GM12878 (cell line): ENCODE measurements at regions of chr12 and their contacts with region 1.

Region 1: DNA sequence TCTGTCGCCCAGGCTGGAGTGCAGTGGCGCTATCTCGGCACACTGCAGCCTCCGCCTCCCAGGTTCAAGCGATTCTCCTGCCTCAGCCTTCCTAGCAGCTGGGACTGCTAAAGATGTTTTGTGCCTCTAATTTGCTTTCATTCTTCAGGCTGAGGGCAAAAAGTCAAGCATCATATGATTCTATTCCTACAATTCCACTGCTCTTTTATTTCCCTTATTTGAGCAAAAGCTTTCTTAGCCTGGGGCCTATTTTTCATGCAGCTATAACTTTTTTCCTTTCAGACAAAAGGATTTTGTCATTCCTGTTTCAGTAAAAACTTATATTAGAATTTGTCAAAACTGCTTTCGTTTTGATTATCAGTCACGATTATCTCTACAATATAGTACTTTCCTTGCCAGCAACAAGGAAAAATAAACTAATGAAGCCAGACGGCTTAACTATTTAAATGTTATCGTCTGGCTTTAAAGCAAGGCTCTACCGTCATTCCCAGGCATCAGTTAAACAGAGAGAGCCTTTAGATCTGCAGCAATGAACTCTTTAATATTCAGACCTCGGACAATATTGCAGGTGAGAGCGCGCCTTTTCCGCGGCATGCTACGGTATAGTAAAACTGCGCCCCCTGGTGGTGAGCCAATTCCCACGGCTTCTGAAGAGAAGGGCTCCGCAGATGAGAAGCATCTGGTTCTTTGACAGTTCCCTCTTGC is 1.4 kb upstream of the SLC2A13 start:
- DNase-seq: peak; percentile 42
- ATAC-seq: peak; percentile 64
- H3K4me3 ChIP-seq: peak overlapping the region; percentile 33
- H3K27ac ChIP-seq: no peak overlapping the region
- H3K4me1 ChIP-seq: peaks cover 11% of the 10 kb centered on the region
- H3K27me3 ChIP-seq: peaks cover 0 to 13% of the 10 kb centered on the region in 2 experiments; a peak in 2 of 4 replicates
- CTCF ChIP-seq: peak; percentile 77 to 87 (median 86)
- EP300 ChIP-seq: no peak
- POLR2A ChIP-seq: no peak
- RAD21 ChIP-seq: peak; percentile 63

Region 2: DNA sequence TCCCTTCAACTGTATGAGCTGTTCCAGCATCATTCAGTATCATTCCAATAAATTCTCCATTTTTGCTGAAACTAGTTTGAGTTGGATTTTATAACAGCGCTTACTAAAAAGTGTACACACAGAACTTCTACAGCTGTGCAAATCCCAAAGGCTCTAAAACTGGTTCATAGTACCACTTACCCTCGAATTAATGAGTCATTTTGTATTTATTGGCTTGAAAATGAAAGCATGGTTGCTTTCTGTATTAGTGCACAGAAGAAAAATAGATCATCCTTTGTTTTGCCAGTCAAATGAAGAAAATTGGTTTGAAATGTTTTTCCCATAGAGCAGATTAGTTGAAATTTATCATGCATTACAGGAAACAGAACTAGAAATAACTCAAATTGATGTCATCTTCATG is 933.5 kb before region 1 on chr12:
- CTCF ChIA-PET with region 1: no interaction called
- POLR2A ChIA-PET with region 1: no interaction called
- RAD21 ChIA-PET with region 1: no interaction called
- SMC1A ChIA-PET with region 1: no interaction called
- in situ Hi-C with region 1: no loop called
- intact Hi-C with region 1: no loop called
- DNase-seq: no peak
- ATAC-seq: peak; percentile 73
- H3K4me3 ChIP-seq: no peak overlapping the region
- H3K27ac ChIP-seq: no peak overlapping the region
- H3K4me1 ChIP-seq: no peaks in the 10 kb centered on the region
- H3K27me3 ChIP-seq: no peaks in the 10 kb centered on the region
- CTCF ChIP-seq: no peak
- EP300 ChIP-seq: no peak
- POLR2A ChIP-seq: no peak
- RAD21 ChIP-seq: no peak

Region 3: GRCh38 chr12:39619660-39620433 is 487.4 kb before region 1 on chr12 and contains the start of gene ABCD2:
- CTCF ChIA-PET with region 1: interaction called, 3 read pairs
- POLR2A ChIA-PET with region 1: no interaction called
- RAD21 ChIA-PET with region 1: no interaction called
- SMC1A ChIA-PET with region 1: no interaction called
- in situ Hi-C with region 1: loop called (anchors 25 kb)
- intact Hi-C with region 1: no loop called
- DNase-seq: peak; percentile 97
- ATAC-seq: peak; percentile 62
- H3K4me3 ChIP-seq: peak within 1 kb of the TSS; percentile 95
- H3K27ac ChIP-seq: peak within 1 kb of the TSS; percentile 98
- H3K4me1 ChIP-seq: peaks cover 16% of the 10 kb centered on the region
- H3K27me3 ChIP-seq: no peaks in the 10 kb centered on the region
- CTCF ChIP-seq: peak; percentile 3 to 30 (median 21); a peak in 2 of 6 replicates
- EP300 ChIP-seq: peak; percentile 32 to 86; a peak in 3 of 4 replicates
- POLR2A ChIP-seq: peak; percentile 62
- RAD21 ChIP-seq: no peak
- polyA plus RNA-seq, gene ABCD2: 4.4 to 5.7 TPM

Region 4: GRCh38 chr12:39990122-39991101 is 116.8 kb before region 1 on chr12:
- CTCF ChIA-PET with region 1: interaction called, 19 read pairs
- POLR2A ChIA-PET with region 1: no interaction called
- RAD21 ChIA-PET with region 1: interaction called, 13 read pairs
- SMC1A ChIA-PET with region 1: interaction called, 6 read pairs
- in situ Hi-C with region 1: no loop called
- intact Hi-C with region 1: no loop called
- DNase-seq: peak; percentile 9
- ATAC-seq: peak; percentile 98
- H3K4me3 ChIP-seq: no peak overlapping the region
- H3K27ac ChIP-seq: no peak overlapping the region
- H3K4me1 ChIP-seq: no peaks in the 10 kb centered on the region
- H3K27me3 ChIP-seq: no peaks in the 10 kb centered on the region
- CTCF ChIP-seq: peak; percentile 78 to 86 (median 82)
- EP300 ChIP-seq: no peak
- POLR2A ChIP-seq: no peak
- RAD21 ChIP-seq: peak; percentile 68

Region 5: DNA sequence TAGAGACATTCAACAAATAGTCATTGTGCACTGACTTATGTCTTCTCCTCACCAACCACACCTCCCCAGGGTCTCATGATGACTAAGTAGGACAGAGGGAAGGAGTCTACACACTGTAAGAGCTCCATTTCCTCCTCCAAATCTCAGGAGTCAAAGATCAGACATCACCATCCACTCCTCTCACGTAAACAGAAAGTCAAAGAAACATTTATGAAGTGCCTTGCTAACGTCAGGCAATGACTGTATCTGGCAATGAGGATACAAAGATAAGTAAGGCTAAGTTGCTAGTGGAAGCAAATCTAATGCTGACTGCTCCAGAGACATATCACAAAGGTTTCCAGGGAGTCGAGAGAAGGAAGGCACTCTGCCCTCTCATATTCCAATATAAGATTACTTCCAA is 90.3 kb before region 1 on chr12:
- CTCF ChIA-PET with region 1: interaction called, 103 read pairs
- POLR2A ChIA-PET with region 1: no interaction called
- RAD21 ChIA-PET with region 1: interaction called, 76 read pairs
- SMC1A ChIA-PET with region 1: interaction called, 76 read pairs
- in situ Hi-C with region 1: loop called (anchors 5 kb)
- intact Hi-C with region 1: no loop called
- DNase-seq: no peak
- ATAC-seq: no peak
- H3K4me3 ChIP-seq: no peak overlapping the region
- H3K27ac ChIP-seq: no peak overlapping the region
- H3K4me1 ChIP-seq: no peaks in the 10 kb centered on the region
- H3K27me3 ChIP-seq: no peaks in the 10 kb centered on the region
- CTCF ChIP-seq: no peak
- EP300 ChIP-seq: no peak
- POLR2A ChIP-seq: no peak
- RAD21 ChIP-seq: no peak

Region 6: DNA sequence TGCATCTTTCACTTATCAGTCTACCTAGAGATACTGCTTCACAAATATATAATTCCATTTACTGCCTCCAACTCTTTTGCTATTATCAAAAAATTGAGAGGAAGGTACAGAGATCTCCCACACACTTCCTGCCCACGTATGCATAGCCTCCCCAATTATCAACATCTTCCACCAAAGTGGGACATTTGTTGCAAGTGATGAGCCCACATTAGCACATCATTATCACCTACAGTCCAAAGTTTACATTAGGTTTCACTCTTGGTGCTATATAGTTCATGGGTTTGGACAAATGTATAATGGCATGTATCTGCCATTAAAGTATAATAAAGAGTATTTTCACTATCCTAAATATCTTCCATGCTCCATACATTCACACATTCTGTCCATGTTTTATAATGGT is 67.7 kb before region 1 on chr12:
- CTCF ChIA-PET with region 1: interaction called, 35 read pairs
- POLR2A ChIA-PET with region 1: interaction called, 3 read pairs
- RAD21 ChIA-PET with region 1: interaction called, 18 read pairs
- SMC1A ChIA-PET with region 1: interaction called, 19 read pairs
- in situ Hi-C with region 1: no loop called
- intact Hi-C with region 1: no loop called
- DNase-seq: no peak
- ATAC-seq: peak; percentile 37; the same call in 1 of the 3 replicates
- H3K4me3 ChIP-seq: no peak overlapping the region
- H3K27ac ChIP-seq: no peak overlapping the region
- H3K4me1 ChIP-seq: no peaks in the 10 kb centered on the region
- H3K27me3 ChIP-seq: no peaks in the 10 kb centered on the region
- CTCF ChIP-seq: no peak
- EP300 ChIP-seq: no peak
- POLR2A ChIP-seq: no peak
- RAD21 ChIP-seq: no peak

Region 7: GRCh38 chr12:40117818-40118217 is 10.6 kb after region 1 on chr12:
- CTCF ChIA-PET with region 1: interaction called, 42 read pairs
- POLR2A ChIA-PET with region 1: no interaction called
- RAD21 ChIA-PET with region 1: interaction called, 8 read pairs
- SMC1A ChIA-PET with region 1: interaction called, 24 read pairs
- in situ Hi-C with region 1: no loop called
- intact Hi-C with region 1: no loop called
- DNase-seq: peak; percentile 51
- ATAC-seq: peak; percentile 94
- H3K4me3 ChIP-seq: no peak overlapping the region
- H3K27ac ChIP-seq: no peak overlapping the region
- H3K4me1 ChIP-seq: peaks cover 3% of the 10 kb centered on the region; the same call in 1 of the 2 replicates
- H3K27me3 ChIP-seq: no peaks in the 10 kb centered on the region; a peak in 1 of 4 replicates
- CTCF ChIP-seq: no peak
- EP300 ChIP-seq: peak; percentile 44 to 59; a peak in 2 of 4 replicates
- POLR2A ChIP-seq: no peak
- RAD21 ChIP-seq: no peak

Region 8: GRCh38 chr12:40215977-40216376 is 108.7 kb after region 1 on chr12:
- CTCF ChIA-PET with region 1: no interaction called
- POLR2A ChIA-PET with region 1: no interaction called
- RAD21 ChIA-PET with region 1: no interaction called
- SMC1A ChIA-PET with region 1: no interaction called
- in situ Hi-C with region 1: no loop called
- intact Hi-C with region 1: no loop called
- DNase-seq: no peak
- ATAC-seq: no peak
- H3K4me3 ChIP-seq: no peak overlapping the region
- H3K27ac ChIP-seq: no peak overlapping the region
- H3K4me1 ChIP-seq: no peaks in the 10 kb centered on the region
- H3K27me3 ChIP-seq: no peaks in the 10 kb centered on the region
- CTCF ChIP-seq: no peak
- EP300 ChIP-seq: no peak
- POLR2A ChIP-seq: no peak
- RAD21 ChIP-seq: no peak